SK-N-SH (cell line): ENCODE measurements at regions of chr2 and their contacts with region 1.

Region 1: DNA sequence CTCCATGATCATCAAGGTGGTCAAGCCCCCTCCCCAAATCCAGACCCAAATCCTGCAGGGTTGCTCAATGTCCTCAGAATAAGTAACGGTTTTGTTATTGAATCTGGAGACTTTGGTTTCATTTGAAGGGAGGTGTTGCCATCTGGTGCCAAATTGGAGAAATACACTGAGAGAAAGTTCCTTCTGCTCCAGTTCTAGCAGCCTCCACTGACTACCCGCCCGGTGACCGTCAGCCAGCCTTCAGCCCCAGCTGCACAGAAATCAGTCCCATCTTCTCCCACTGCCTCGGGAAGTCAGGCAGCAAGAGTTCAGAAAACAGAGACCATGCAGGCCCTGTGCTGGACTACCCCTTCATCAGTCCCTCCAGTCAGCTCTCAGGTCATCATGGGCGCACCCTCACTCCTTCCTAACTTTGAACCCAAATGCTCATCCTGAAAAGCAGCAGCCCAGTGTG is 38.7 kb downstream of the PKDCC start:
- DNase-seq: peak; percentile 87
- H3K4me3 ChIP-seq: no peak overlapping the region
- H3K27ac ChIP-seq: no peak overlapping the region
- H3K4me1 ChIP-seq: peaks cover 0 to 6% of the 10 kb centered on the region in 2 experiments; a peak in 2 of 4 replicates
- H3K27me3 ChIP-seq: no peaks in the 10 kb centered on the region
- CTCF ChIP-seq: peak; percentile 86
- EP300 ChIP-seq: no peak
- RAD21 ChIP-seq: peak; percentile 99

Region 2: DNA sequence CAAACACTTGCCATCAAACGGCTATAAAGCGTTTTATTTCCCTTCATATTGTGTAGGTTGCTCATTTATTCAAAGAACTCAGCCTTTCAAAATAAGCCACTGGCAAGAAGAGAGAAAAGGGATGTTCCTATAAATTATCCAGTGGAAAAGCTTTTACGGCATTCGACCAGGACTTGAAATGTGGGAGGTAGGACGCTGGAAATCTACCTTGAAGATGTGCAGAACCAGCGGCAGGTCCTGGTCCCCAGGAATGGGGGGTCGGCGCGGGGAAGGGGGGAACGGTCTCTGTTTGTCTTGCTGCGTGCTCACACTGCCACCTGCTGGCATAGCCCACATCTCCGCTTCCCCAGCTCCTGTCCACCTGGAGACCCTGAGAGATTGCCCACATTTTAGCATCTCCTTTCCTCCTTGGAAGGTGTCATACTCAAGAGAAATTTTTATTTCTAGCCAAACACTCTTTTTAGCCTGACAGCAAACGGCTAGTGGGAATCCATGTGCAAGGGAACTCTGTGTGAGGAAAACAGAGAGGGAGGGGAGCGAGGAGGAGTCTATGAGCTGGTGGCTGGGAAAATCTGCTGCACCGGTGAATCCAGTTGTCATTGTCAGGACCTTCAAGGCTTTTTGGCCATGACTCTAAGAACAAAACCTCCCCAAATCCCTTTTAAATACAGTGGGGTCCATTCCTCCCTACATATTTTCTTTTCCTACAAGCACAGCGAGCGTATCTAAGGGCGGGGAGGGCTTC is 387.7 kb before region 1 on chr2:
- CTCF ChIA-PET with region 1: no interaction called
- POLR2A ChIA-PET with region 1: no interaction called
- DNase-seq: peak; percentile 85
- H3K4me3 ChIP-seq: peak overlapping the region in 1 of 2 experiments; percentile 12; a peak in 1 of 4 replicates
- H3K27ac ChIP-seq: no peak overlapping the region
- H3K4me1 ChIP-seq: peaks cover 0 to 6% of the 10 kb centered on the region in 2 experiments; a peak in 1 of 4 replicates
- H3K27me3 ChIP-seq: no peaks in the 10 kb centered on the region
- CTCF ChIP-seq: peak; percentile 92
- EP300 ChIP-seq: no peak
- RAD21 ChIP-seq: peak; percentile 96

Region 3: GRCh38 chr2:41859615-41860520 is 226.7 kb before region 1 on chr2:
- CTCF ChIA-PET with region 1: interaction called, 897 read pairs
- POLR2A ChIA-PET with region 1: no interaction called
- DNase-seq: no peak
- H3K4me3 ChIP-seq: no peak overlapping the region
- H3K27ac ChIP-seq: peak overlapping the region in 1 of 2 experiments; percentile 18; a peak in 1 of 4 replicates
- H3K4me1 ChIP-seq: peaks cover 0 to 6% of the 10 kb centered on the region in 2 experiments; a peak in 1 of 4 replicates
- H3K27me3 ChIP-seq: no peaks in the 10 kb centered on the region
- CTCF ChIP-seq: no peak
- EP300 ChIP-seq: no peak
- RAD21 ChIP-seq: no peak

Region 4: GRCh38 chr2:41896186-41896846 is 190.2 kb before region 1 on chr2:
- CTCF ChIA-PET with region 1: interaction called, 18 read pairs
- POLR2A ChIA-PET with region 1: no interaction called
- DNase-seq: no peak
- H3K4me3 ChIP-seq: no peak overlapping the region
- H3K27ac ChIP-seq: peak overlapping the region in 1 of 2 experiments; percentile 69; a peak in 2 of 4 replicates
- H3K4me1 ChIP-seq: peaks cover 0 to 23% of the 10 kb centered on the region in 2 experiments; a peak in 2 of 4 replicates
- H3K27me3 ChIP-seq: peaks cover 39% of the 10 kb centered on the region; the same call in 1 of the 2 replicates
- CTCF ChIP-seq: no peak
- EP300 ChIP-seq: peak in 1 of 2 experiments; percentile 80; a peak in 2 of 4 replicates
- RAD21 ChIP-seq: no peak

Region 5: DNA sequence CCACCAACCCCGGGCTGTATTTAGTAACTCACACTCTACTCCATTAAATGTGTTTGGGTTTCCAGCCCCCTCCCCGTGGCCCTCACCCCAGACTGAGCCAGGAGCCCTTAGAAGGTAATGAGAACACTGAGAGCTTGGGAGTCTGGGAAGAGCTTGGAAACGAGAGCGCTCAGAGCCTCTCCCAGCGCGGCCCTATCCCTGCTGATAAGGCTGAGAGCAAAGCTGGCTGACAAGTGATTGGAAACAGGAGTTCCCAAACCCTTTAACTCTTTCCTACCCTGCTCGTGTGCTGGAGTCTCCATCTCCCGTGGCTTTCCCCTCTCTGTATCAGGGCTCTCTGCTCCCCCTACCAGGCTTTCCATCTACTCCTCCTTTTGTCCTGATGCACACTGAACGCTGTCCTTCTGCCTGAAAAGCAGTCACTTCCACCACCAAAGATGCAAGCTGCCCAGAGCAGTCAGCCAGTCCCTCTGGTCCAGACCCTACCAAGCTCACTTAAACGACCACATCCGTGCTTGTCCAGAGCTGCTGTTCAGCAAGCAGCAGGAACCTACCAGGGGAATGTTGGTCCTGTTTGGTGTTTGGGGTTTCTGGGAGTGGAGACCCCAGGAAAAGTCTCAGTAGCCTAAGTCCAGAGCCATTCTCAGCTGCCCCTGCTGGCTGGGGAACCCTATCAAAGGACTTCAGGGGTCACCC is 138.7 kb before region 1 on chr2:
- CTCF ChIA-PET with region 1: interaction called, 16 read pairs
- POLR2A ChIA-PET with region 1: no interaction called
- DNase-seq: peak; percentile 81
- H3K4me3 ChIP-seq: no peak overlapping the region; a peak in 1 of 4 replicates
- H3K27ac ChIP-seq: peak overlapping the region in 1 of 2 experiments; percentile 95; a peak in 2 of 4 replicates
- H3K4me1 ChIP-seq: peaks cover 0 to 52% of the 10 kb centered on the region in 2 experiments; a peak in 3 of 4 replicates
- H3K27me3 ChIP-seq: peaks cover 15% of the 10 kb centered on the region
- CTCF ChIP-seq: no peak
- EP300 ChIP-seq: peak in 1 of 2 experiments; percentile 89; a peak in 2 of 4 replicates
- RAD21 ChIP-seq: peak; percentile 45

Region 6: DNA sequence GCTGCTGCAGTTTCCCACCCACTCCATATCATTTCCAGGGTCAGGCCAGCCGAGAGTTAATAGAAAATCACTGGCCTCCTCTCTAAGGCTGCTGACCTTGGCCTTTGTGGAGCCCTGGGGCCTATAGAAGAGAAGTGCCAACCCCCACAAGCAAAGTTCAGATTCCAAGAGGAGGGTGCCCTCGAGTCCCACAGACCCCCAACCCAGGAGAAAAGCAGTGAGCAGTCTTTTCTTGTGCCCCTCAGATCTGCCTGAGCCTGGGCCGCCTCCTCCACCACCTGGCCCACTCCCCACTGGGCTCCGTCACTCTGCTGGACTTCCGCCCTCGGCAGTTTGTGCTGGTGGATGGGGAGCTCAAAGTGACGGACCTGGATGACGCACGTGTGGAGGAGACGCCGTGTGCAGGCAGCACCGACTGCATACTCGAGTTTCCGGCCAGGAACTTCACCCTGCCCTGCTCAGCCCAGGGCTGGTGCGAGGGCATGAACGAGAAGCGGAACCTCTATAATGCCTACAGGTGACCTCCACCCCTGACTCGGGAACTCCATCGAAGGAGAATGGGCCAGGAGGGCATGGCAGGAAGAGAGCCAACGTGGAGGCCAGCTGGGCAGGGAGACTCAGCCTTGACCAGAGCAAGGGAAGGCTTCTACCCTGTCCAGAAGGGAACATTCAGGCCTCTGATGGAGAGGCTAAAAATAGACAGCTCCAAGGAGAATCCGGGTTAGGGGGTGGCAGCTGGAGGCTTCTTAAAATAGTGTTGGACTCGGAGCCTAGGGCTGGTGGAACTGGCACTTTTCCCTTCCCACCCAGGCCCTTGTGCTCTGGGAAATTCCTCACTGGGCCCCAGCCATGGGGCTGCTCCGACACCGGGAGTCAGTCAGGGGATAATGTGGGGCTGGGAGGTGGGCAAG is 32.5 kb before region 1 on chr2:
- CTCF ChIA-PET with region 1: interaction called, 116 read pairs
- POLR2A ChIA-PET with region 1: no interaction called
- DNase-seq: no peak
- H3K4me3 ChIP-seq: no peak overlapping the region
- H3K27ac ChIP-seq: no peak overlapping the region
- H3K4me1 ChIP-seq: peaks cover 0 to 35% of the 10 kb centered on the region in 2 experiments; a peak in 1 of 4 replicates
- H3K27me3 ChIP-seq: no peaks in the 10 kb centered on the region
- CTCF ChIP-seq: no peak
- EP300 ChIP-seq: no peak
- RAD21 ChIP-seq: no peak

Region 7: GRCh38 chr2:42110641-42111322 is 24.3 kb after region 1 on chr2:
- CTCF ChIA-PET with region 1: interaction called, 15 read pairs
- POLR2A ChIA-PET with region 1: no interaction called
- DNase-seq: no peak
- H3K4me3 ChIP-seq: no peak overlapping the region
- H3K27ac ChIP-seq: peak overlapping the region in 1 of 2 experiments; percentile 44; a peak in 1 of 4 replicates
- H3K4me1 ChIP-seq: peaks cover 3 to 8% of the 10 kb centered on the region in 2 experiments; a peak in 3 of 4 replicates
- H3K27me3 ChIP-seq: no peaks in the 10 kb centered on the region
- CTCF ChIP-seq: no peak
- EP300 ChIP-seq: no peak
- RAD21 ChIP-seq: no peak

Region 8: DNA sequence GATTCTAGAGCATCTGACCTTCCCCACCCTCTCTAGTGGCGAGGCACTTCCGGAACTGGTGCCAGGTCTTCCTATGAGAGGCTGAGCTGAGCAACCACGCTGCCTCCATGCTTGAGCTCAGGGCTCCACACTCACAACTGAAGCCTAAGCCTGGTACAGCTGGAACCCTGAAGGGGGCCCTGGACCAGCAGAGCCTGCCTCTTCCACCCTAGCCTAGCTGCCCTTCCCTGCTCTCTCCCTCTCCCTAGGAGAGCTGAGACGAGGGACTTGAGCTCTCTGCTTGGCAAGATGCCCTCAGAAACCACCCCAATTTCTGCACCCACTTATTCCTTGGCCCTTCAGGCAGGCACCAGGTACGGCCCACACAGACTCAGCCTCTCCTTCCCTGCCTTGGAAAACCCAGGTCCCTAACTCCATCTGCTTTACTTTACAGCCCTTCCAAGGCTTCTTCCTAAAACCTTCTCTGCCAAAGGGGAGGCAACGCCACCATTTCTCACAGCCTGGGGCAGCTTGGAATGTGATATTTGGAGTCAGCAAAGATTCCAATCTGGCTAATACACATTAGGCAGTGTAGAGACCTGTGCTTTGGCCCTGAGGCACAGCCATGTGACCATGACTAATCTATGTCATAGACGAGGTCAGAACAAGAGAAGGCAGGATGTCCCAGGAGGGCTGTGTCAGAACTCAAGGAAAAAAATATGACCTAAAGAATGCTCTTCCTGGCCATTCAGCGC is 255.7 kb after region 1 on chr2:
- CTCF ChIA-PET with region 1: interaction called, 10 read pairs
- POLR2A ChIA-PET with region 1: no interaction called
- DNase-seq: peak; percentile 58
- H3K4me3 ChIP-seq: no peak overlapping the region
- H3K27ac ChIP-seq: peak overlapping the region; percentile 41 to 92; a peak in 3 of 4 replicates
- H3K4me1 ChIP-seq: peaks cover 17 to 19% of the 10 kb centered on the region in 2 experiments; a peak in 3 of 4 replicates
- H3K27me3 ChIP-seq: no peaks in the 10 kb centered on the region
- CTCF ChIP-seq: no peak
- EP300 ChIP-seq: no peak; a peak in 1 of 4 replicates
- RAD21 ChIP-seq: no peak

Region 9: GRCh38 chr2:42547014-42547413 is 460.5 kb after region 1 on chr2:
- CTCF ChIA-PET with region 1: no interaction called
- POLR2A ChIA-PET with region 1: no interaction called
- DNase-seq: no peak
- H3K4me3 ChIP-seq: no peak overlapping the region
- H3K27ac ChIP-seq: no peak overlapping the region
- H3K4me1 ChIP-seq: peaks cover 0 to 5% of the 10 kb centered on the region in 2 experiments; a peak in 1 of 4 replicates
- H3K27me3 ChIP-seq: no peaks in the 10 kb centered on the region
- CTCF ChIP-seq: no peak
- EP300 ChIP-seq: no peak
- RAD21 ChIP-seq: no peak